ENCODE measurements at regions of chr4 and their contacts with region 1.

Region 1: DNA sequence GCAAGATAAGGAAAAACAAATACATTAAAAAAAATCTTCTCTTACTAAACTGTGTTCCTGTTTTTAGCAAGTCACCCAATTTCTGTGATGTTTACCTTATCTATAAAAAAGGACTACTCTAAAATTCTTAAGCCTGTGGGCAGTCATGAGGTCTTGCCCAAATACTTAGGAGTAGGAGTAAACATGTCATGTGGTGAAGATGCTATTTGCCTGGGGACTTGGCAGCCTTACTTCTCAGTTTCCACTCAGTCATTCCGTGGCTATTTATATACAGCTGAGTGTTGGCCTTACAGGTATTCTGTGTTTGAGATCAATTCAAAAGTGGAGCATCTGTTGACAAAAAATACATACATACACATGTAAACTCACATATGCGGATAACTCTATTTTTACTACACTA is 89.9 kb upstream of the TLR2 start:
- DNase-seq: no peak
- ATAC-seq: no peak
- H3K4me3 Mint-ChIP-seq: no peak overlapping the region
- H3K27ac Mint-ChIP-seq: no peak overlapping the region
- H3K4me1 Mint-ChIP-seq: peaks cover 4% of the 10 kb centered on the region
- H3K27me3 Mint-ChIP-seq: no peaks in the 10 kb centered on the region
- CTCF ChIP-seq: no peak

Region 2: GRCh38 chr4:153579872-153580271 is 14.3 kb before region 1 on chr4:
- CTCF ChIA-PET with region 1: no interaction called
- POLR2A ChIA-PET with region 1: interaction called, 3 read pairs
- intact Hi-C with region 1: loop called (anchors 2 kb)
- DNase-seq: no peak
- ATAC-seq: peak; percentile 73
- H3K4me3 Mint-ChIP-seq: peak overlapping the region; percentile 36
- H3K27ac Mint-ChIP-seq: peak overlapping the region; percentile 59
- H3K4me1 Mint-ChIP-seq: peaks cover 71% of the 10 kb centered on the region
- H3K27me3 Mint-ChIP-seq: no peaks in the 10 kb centered on the region
- CTCF ChIP-seq: no peak

Region 3: DNA sequence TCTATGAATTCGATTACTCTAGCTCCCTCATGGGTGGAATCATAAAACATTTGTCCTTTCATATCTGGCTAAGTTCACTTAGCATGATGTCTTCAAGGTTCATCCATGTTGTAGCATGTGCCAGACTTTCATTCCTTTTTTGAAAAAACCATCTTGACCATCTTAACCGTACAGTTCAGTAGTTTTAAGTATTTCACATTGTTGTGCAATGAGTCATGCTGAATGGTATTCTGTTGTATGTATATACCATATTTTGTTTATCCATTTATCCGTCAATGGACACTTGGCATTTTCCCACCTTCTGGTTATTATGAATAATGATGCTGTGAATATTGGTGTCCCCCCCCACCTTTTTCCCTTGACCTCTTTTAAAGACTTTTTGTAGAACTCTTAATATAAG is 17.5 kb after region 1 on chr4:
- CTCF ChIA-PET with region 1: no interaction called
- POLR2A ChIA-PET with region 1: no interaction called
- intact Hi-C with region 1: loop called (anchors 2 kb)
- DNase-seq: no peak
- ATAC-seq: no peak
- H3K4me3 Mint-ChIP-seq: no peak overlapping the region
- H3K27ac Mint-ChIP-seq: no peak overlapping the region
- H3K4me1 Mint-ChIP-seq: peaks cover 22% of the 10 kb centered on the region
- H3K27me3 Mint-ChIP-seq: no peaks in the 10 kb centered on the region
- CTCF ChIP-seq: no peak

Measured in activated B cell treated with CpG ODN at 0.5 μM for 24 hours (primary cell).